ENCODE measurements at regions of chr5 and their contacts with region 1.

Region 1: GRCh38 chr5:141960449-141961202 is 2.6 kb upstream of the PCDH12 start:
- DNase-seq: peak; percentile 95

Region 2: GRCh38 chr5:141691867-141692532 is 268.6 kb before region 1 on chr5:
- intact Hi-C with region 1: loop called (anchors 1 kb)
- DNase-seq: peak; percentile 95

Region 3: GRCh38 chr5:141805874-141806595 is 154.6 kb before region 1 on chr5:
- intact Hi-C with region 1: loop called (anchors 5 kb)
- DNase-seq: no peak

Region 4: DNA sequence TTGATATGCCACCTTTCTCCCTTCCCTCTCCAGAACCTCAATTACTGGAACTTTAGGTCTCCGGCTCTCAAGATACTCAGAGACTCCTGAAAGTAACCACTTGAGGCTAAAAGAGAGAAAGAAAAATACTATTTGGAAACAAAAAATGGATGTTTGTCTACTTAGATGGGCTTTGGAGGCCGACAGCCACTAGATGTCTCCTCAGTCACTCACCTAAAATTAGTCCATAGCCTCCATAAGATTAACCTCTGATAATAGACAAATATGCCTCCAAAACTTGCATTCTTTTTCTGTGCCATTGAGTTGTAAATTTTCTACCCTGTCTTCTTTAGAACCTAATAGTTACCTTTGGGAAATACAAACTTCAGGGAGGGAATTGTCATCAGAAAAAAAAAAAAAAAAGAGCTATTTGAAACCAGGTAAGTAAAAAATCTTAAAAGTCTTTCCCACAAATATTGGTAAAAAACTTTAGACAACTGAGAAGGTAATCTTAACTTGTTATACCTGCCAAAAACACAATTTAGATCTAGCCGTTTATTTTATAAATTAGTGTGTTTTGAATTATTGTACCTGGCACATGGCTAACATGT is 71.2 kb before region 1 on chr5:
- intact Hi-C with region 1: loop called (anchors 2 kb)
- DNase-seq: no peak

Region 5: DNA sequence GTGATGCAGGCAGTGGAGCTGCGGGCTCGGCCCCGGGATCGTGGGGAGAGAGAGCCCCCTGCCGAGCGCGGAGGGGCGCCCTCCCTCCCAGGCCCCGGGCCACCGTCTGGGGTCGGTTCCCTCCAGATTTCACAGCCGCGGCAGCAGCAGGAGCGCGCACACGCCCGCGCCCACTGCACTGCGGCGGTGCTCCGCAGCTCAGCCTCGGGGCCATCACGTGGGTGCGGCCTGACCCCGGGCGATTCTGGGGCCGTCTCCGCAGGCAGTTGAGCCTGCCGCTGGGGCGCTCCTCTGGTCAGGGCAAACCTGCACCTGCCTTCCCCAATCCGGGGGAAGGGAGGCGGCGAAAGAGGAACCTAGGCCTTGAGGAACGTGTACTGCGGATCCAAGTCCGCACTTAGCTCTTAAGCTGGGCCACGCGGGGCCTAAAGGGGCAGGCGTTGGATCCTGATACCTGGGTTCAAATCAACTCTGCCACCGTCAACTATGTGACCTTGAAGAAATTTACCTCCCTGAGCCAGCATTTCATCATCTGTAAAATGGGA is 46.4 kb before region 1 on chr5:
- intact Hi-C with region 1: no loop called
- DNase-seq: peak; percentile 86

Region 6: GRCh38 chr5:141929398-141930058 is 31.1 kb before region 1 on chr5:
- intact Hi-C with region 1: loop called (anchors 2 kb)
- DNase-seq: no peak